ENCODE measurements at regions of chr2 and their contacts with region 1.

Region 1: GRCh38 chr2:174697255-174697654 is 67.0 kb downstream of the CHRNA1 start:
- DNase-seq: peak; percentile 72
- H3K4me3 Mint-ChIP-seq: no peak overlapping the region
- H3K27ac Mint-ChIP-seq: no peak overlapping the region
- H3K4me1 Mint-ChIP-seq: peaks cover 3% of the 10 kb centered on the region
- H3K27me3 Mint-ChIP-seq: peaks cover 29% of the 10 kb centered on the region

Region 2: DNA sequence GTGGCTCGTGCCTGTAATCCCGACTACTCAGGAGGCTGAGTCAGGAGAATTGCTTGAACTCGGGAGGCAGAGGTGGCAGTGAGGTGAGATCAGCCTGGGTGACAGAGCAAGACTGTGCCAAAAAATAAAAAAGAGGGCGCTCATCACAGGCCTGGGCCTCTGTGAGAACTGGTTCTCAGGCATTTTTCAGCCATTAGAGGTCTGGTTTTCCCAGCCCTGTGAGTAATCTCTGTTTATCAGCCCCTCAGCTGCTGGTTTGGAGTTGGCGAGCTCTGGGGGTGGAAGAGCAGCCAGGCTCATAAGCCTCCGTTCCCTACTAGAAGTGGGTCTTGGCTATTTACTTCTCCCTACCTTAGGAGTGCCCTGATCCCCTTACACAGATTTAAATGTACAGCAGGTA is 14.0 kb after region 1 on chr2:
- CTCF ChIA-PET with region 1: interaction called, 50 read pairs
- POLR2A ChIA-PET with region 1: no interaction called
- DNase-seq: no peak
- H3K4me3 Mint-ChIP-seq: no peak overlapping the region
- H3K27ac Mint-ChIP-seq: no peak overlapping the region
- H3K4me1 Mint-ChIP-seq: peaks cover 1% of the 10 kb centered on the region
- H3K27me3 Mint-ChIP-seq: peaks cover 12% of the 10 kb centered on the region

Region 3: GRCh38 chr2:174729797-174730697 is 32.8 kb after region 1 on chr2:
- CTCF ChIA-PET with region 1: interaction called, 10 read pairs
- POLR2A ChIA-PET with region 1: no interaction called
- DNase-seq: peak; percentile 44
- H3K4me3 Mint-ChIP-seq: peak overlapping the region; percentile 73
- H3K27ac Mint-ChIP-seq: no peak overlapping the region
- H3K4me1 Mint-ChIP-seq: peaks cover 21% of the 10 kb centered on the region
- H3K27me3 Mint-ChIP-seq: peaks cover 43% of the 10 kb centered on the region

Region 4: GRCh38 chr2:174778085-174778981 is 81.1 kb after region 1 on chr2:
- CTCF ChIA-PET with region 1: interaction called, 13 read pairs
- POLR2A ChIA-PET with region 1: no interaction called
- DNase-seq: peak; percentile 80
- H3K4me3 Mint-ChIP-seq: peak overlapping the region; percentile 5
- H3K27ac Mint-ChIP-seq: peak overlapping the region; percentile 27
- H3K4me1 Mint-ChIP-seq: peaks cover 36% of the 10 kb centered on the region
- H3K27me3 Mint-ChIP-seq: no peaks in the 10 kb centered on the region

Region 5: GRCh38 chr2:174997110-174997509 is 299.9 kb after region 1 on chr2:
- CTCF ChIA-PET with region 1: interaction called, 10 read pairs
- POLR2A ChIA-PET with region 1: no interaction called
- DNase-seq: no peak
- H3K4me3 Mint-ChIP-seq: no peak overlapping the region
- H3K27ac Mint-ChIP-seq: no peak overlapping the region
- H3K4me1 Mint-ChIP-seq: peaks cover 7% of the 10 kb centered on the region
- H3K27me3 Mint-ChIP-seq: peaks cover 12% of the 10 kb centered on the region